IMR-90 (cell line): ENCODE measurements at regions of chr12 and their contacts with region 1.

Region 1: DNA sequence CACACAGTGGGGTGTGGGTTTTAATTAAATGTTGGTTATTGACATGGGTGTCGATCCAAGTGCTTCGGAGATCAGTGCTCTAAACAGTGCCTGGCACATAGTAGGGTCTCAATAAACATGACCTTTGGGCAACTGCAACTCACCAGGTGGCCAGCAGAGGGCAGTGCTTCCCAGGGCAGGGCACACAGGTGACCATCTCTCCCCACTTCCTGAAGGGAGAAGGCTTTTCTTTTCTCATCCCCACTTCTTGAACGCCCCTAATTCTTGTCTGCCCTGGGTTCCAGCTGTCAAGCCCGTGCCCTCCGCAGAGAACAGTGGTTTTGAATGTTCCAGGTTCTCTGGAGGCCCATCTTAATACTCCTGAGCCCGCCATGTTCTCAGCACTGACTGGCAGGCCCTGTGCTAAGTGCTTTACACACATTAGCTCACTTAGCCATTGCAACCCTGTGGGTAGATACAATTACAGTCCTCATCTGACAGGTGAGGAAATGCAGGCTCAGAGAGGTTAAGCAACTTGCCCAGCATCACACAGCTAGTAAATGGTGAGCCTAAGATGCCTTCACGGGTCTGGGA is 16.3 kb downstream of the RAPGEF3 start:
- DNase-seq: no peak
- ATAC-seq: peak; percentile 36; the same call in 1 of the 2 replicates
- H3K4me3 ChIP-seq: no peak overlapping the region
- H3K27ac ChIP-seq: no peak overlapping the region
- H3K4me1 ChIP-seq: peaks cover 6% of the 10 kb centered on the region
- H3K27me3 ChIP-seq: peaks cover 28% of the 10 kb centered on the region
- CTCF ChIP-seq: peak; percentile 87
- POLR2A ChIP-seq: no peak
- RAD21 ChIP-seq: peak; percentile 84

Region 2: GRCh38 chr12:47672068-47672467 is 70.3 kb before region 1 on chr12:
- CTCF ChIA-PET with region 1: no interaction called
- POLR2A ChIA-PET with region 1: no interaction called
- dilution Hi-C with region 1: no loop called
- in situ Hi-C with region 1: no loop called
- intact Hi-C with region 1: no loop called
- DNase-seq: no peak
- ATAC-seq: no peak
- H3K4me3 ChIP-seq: no peak overlapping the region
- H3K27ac ChIP-seq: no peak overlapping the region
- H3K4me1 ChIP-seq: no peaks in the 10 kb centered on the region
- H3K27me3 ChIP-seq: no peaks in the 10 kb centered on the region
- CTCF ChIP-seq: no peak
- POLR2A ChIP-seq: no peak
- RAD21 ChIP-seq: no peak

Region 3: GRCh38 chr12:47752552-47752951 is 10.2 kb after region 1 on chr12:
- CTCF ChIA-PET with region 1: interaction called, 11 read pairs
- POLR2A ChIA-PET with region 1: no interaction called
- dilution Hi-C with region 1: no loop called
- in situ Hi-C with region 1: no loop called
- intact Hi-C with region 1: no loop called
- DNase-seq: peak; percentile 57
- ATAC-seq: peak; percentile 67
- H3K4me3 ChIP-seq: no peak overlapping the region
- H3K27ac ChIP-seq: no peak overlapping the region
- H3K4me1 ChIP-seq: peaks cover 12% of the 10 kb centered on the region
- H3K27me3 ChIP-seq: peaks cover 5% of the 10 kb centered on the region; the same call in 1 of the 2 replicates
- CTCF ChIP-seq: no peak
- POLR2A ChIP-seq: no peak
- RAD21 ChIP-seq: no peak

Region 4: GRCh38 chr12:47758834-47759690 is 16.7 kb after region 1 on chr12 and contains the start of gene RAPGEF3:
- CTCF ChIA-PET with region 1: interaction called, 11 read pairs
- POLR2A ChIA-PET with region 1: no interaction called
- dilution Hi-C with region 1: no loop called
- in situ Hi-C with region 1: no loop called
- intact Hi-C with region 1: loop called (anchors 2 kb)
- DNase-seq: peak; percentile 75
- ATAC-seq: peak; percentile 96
- H3K4me3 ChIP-seq: peak within 1 kb of the TSS; percentile 65
- H3K27ac ChIP-seq: peak within 1 kb of the TSS; percentile 43
- H3K4me1 ChIP-seq: peaks cover 12% of the 10 kb centered on the region
- H3K27me3 ChIP-seq: no peaks in the 10 kb centered on the region
- CTCF ChIP-seq: peak; percentile 50
- POLR2A ChIP-seq: peak; percentile 35; the same call in 1 of the 2 replicates
- RAD21 ChIP-seq: peak; percentile 39
- total RNA-seq, gene RAPGEF3: 0.83 and 1.3 TPM in 2 replicates

Region 5: GRCh38 chr12:47767216-47767724 is 24.9 kb after region 1 on chr12:
- CTCF ChIA-PET with region 1: interaction called, 19 read pairs
- POLR2A ChIA-PET with region 1: no interaction called
- dilution Hi-C with region 1: no loop called
- in situ Hi-C with region 1: no loop called
- intact Hi-C with region 1: no loop called
- DNase-seq: peak; percentile 19
- ATAC-seq: no peak
- H3K4me3 ChIP-seq: no peak overlapping the region
- H3K27ac ChIP-seq: no peak overlapping the region
- H3K4me1 ChIP-seq: peaks cover 7% of the 10 kb centered on the region
- H3K27me3 ChIP-seq: no peaks in the 10 kb centered on the region
- CTCF ChIP-seq: peak; percentile 55
- POLR2A ChIP-seq: no peak
- RAD21 ChIP-seq: peak; percentile 50

Region 6: GRCh38 chr12:47779301-47779942 is 37.1 kb after region 1 on chr12:
- CTCF ChIA-PET with region 1: interaction called, 10 read pairs
- POLR2A ChIA-PET with region 1: no interaction called
- dilution Hi-C with region 1: no loop called
- in situ Hi-C with region 1: no loop called
- intact Hi-C with region 1: loop called (anchors 1 kb)
- DNase-seq: peak; percentile 79
- ATAC-seq: peak; percentile 83
- H3K4me3 ChIP-seq: no peak overlapping the region
- H3K27ac ChIP-seq: no peak overlapping the region
- H3K4me1 ChIP-seq: peaks cover 21% of the 10 kb centered on the region
- H3K27me3 ChIP-seq: no peaks in the 10 kb centered on the region
- CTCF ChIP-seq: peak; percentile 98
- POLR2A ChIP-seq: peak; percentile 35; the same call in 1 of the 2 replicates
- RAD21 ChIP-seq: peak; percentile 96